Right ventricle myocardium inferior (tissue), 1 donor: ENCODE measurements at regions of chr1 and their contacts with region 1.

Region 1: GRCh38 chr1:61077676-61078541 is 4.5 kb upstream of the NFIA start:
- DNase-seq: peak; percentile 95
- ATAC-seq: peak; percentile 80

Region 2: DNA sequence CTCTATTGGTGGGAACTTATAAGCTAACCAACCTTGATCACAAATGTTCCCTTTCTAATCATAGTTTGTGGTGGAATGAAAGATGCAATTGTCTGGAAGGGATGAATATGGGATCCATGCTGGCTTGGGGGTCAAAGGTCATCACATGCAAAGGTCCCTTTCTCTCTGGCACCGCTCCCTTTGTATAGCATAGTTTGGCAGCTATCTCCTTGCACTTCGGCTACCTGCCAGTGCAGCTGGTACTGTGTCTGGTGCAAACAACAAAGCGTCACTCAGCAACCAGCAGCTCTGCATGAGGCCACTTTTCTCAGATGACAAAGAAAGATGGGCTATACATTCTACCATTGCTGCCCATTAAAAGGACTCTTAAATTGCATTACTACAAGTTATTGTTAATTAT is 183.8 kb before region 1 on chr1:
- intact Hi-C with region 1: no loop called
- DNase-seq: no peak
- ATAC-seq: no peak

Region 3: GRCh38 chr1:61120998-61121397 is 43.1 kb after region 1 on chr1:
- intact Hi-C with region 1: loop called (anchors 2 kb)
- DNase-seq: no peak
- ATAC-seq: peak; percentile 76

Region 4: GRCh38 chr1:61184040-61184713 is 106.3 kb after region 1 on chr1:
- intact Hi-C with region 1: loop called (anchors 2 kb)
- DNase-seq: peak; percentile 95
- ATAC-seq: peak; percentile 90

Region 5: DNA sequence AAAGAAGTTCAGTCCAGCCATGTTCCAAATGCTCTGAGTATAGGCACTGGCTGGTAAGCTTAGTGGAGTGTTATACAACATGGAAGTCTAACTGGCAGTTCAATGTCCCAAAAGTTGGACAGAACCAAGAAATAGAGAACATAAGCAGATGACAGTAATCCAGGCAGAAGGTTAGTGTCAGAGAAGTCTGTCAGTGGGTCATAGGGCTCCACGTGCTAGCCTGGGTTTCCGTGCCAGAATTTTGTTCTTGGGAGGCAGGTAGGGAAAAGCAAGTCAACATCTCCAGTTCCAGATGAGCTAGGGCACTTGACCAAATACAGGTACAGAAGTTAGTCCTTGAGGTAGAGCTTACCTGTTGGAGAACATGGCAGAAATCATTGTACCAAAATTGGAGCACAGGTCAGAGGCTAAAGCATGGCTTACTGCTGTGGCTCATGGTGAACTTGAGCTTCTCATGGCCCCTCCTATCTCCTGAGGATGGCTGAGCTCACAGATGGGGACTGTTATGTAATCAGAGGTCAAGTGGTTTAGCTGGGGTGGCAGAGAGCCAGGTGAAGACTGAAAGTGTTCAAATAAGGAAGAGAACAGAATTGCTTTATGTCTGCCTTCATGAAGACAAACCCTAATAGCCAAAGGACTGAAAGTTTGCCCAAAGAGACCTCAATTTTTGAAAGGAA is 175.3 kb after region 1 on chr1:
- intact Hi-C with region 1: loop called (anchors 5 kb)
- DNase-seq: peak; percentile 76
- ATAC-seq: peak; percentile 87

Region 6: DNA sequence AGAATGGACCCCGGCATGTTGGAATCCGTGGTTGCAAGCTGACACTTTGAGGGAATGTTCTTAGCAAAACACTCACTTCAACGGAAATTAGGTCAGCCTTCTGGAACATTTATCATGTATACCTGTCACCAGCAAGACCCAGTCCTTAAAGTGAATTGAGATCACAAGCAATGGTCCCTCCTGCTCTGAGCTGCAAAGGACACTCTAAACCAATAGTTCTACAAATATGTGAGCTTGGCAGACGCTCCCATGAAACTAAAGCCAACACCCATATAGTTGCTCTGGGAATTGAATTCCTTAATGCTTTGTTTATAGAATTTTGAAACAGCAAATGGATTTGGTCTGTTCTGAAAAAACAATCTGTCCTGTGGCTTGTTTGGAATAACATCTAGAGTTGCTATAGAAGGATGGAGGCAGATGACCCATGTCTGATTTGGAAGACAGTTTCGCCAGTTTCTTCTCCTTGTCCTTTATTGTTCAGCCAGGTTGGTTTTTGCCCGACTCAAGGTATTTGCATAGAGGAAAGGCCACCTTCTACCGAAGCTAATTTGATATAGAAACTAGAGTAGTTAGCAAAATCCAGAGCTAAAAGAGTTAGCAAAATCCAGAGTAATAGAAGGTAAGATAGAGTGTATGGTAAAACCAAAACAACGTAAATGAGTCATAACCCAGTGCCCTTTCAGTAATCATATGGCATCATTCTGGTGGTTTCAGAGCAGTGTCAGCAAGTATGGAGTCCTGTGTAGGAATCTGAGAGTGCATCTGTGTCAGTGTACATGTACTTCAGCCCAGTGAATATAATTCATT is 240.6 kb after region 1 on chr1:
- intact Hi-C with region 1: loop called (anchors 5 kb)
- DNase-seq: no peak
- ATAC-seq: peak; percentile 84

Region 7: DNA sequence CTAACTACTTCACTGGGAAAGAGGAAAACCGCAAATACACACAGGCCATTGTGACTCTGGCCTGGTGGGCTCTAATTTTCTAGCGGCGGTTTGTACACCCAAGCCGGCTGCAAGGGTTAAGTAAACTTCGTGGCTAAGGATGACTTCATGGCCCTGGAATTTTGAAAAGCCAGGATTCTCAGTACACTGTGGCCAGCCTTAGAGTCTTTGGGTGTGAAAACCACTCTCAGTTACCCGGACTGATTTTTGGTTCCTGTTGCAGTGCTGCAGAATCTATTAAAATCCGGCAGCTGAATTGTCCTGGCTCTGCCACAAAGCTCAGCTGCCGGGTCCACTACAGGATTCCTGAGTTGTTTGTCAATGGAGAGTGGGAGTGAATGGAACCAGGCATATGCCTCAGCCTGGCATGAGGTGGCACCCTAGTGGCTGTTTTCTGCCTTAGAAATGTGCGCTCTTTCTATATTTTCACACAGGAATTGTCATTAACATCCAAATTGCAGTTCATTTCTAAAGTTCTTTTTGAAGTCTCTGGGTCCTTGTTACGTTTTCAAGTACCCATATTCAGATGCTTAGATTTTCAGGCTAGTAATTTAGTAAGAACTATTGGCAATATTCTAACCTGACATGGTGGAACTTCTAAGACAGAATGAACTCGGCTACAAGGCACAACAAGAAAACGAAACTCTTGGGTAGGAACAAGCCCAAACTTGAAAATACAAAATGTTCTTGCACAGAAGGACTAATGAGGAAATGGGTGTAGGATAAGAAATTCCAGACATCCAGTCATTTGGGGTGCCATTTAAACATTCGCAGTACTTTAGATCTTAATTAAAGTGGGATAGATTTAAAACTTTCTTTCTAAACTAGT is 260.3 kb after region 1 on chr1:
- intact Hi-C with region 1: loop called (anchors 2 kb)
- DNase-seq: peak; percentile 73
- ATAC-seq: peak; percentile 84